Psoas muscle (tissue), 8 donors: ENCODE measurements at regions of chr19 and their contacts with region 1.

Region 1: GRCh38 chr19:3984908-3985642 is at the start of gene EEF2:
- DNase-seq: peak; percentile 89 to 96
- ATAC-seq: peak; percentile 64 to 77 (median 70)
- H3K4me3 ChIP-seq: peak within 1 kb of the TSS; percentile 91
- H3K27ac ChIP-seq: peak within 1 kb of the TSS; percentile 95
- H3K4me1 ChIP-seq: peaks cover 44% of the 10 kb centered on the region
- H3K27me3 ChIP-seq: no peaks in the 10 kb centered on the region
- CTCF ChIP-seq: no peak
- total RNA-seq, gene EEF2: 2,332 to 3,628 (median 2,726) TPM

Region 2: GRCh38 chr19:3821857-3822364 is 163.2 kb before region 1 on chr19:
- intact Hi-C with region 1: loop called in 1 of 2 experiments (anchors 5 kb)
- DNase-seq: peak; percentile 56 to 73
- ATAC-seq: peak; percentile 65 to 88 (median 79)
- H3K4me3 ChIP-seq: no peak overlapping the region
- H3K27ac ChIP-seq: no peak overlapping the region
- H3K4me1 ChIP-seq: no peaks in the 10 kb centered on the region
- H3K27me3 ChIP-seq: peaks cover 0 to 38% (median 12%) of the 10 kb centered on the region in 3 donors
- CTCF ChIP-seq: peak; percentile 98

Region 3: GRCh38 chr19:3970808-3971598 is 14.1 kb before region 1 on chr19 and contains the start of gene DAPK3:
- intact Hi-C with region 1: loop called in 1 of 2 experiments (anchors 2 kb)
- DNase-seq: peak; percentile 97 to 99
- ATAC-seq: peak; percentile 69 to 79 (median 76)
- H3K4me3 ChIP-seq: peak within 1 kb of the TSS; percentile 96
- H3K27ac ChIP-seq: peak within 1 kb of the TSS; percentile 99
- H3K4me1 ChIP-seq: peaks cover 47% of the 10 kb centered on the region
- H3K27me3 ChIP-seq: no peaks in the 10 kb centered on the region
- CTCF ChIP-seq: peak; percentile 6
- total RNA-seq, gene DAPK3: 92.6 to 142 (median 105) TPM

Region 4: GRCh38 chr19:4182084-4182810 is 197.2 kb after region 1 on chr19 and contains the starts of genes ANKRD24 and SIRT6:
- intact Hi-C with region 1: loop called in 1 of 2 experiments (anchors 5 kb)
- DNase-seq: peak; percentile 97 to 98
- ATAC-seq: peak; percentile 90 to 97 (median 94)
- H3K4me3 ChIP-seq: peak within 1 kb of the TSS; percentile 90
- H3K27ac ChIP-seq: peak within 1 kb of the TSS; percentile 87
- H3K4me1 ChIP-seq: peaks cover 27% of the 10 kb centered on the region
- H3K27me3 ChIP-seq: no peaks in the 10 kb centered on the region
- CTCF ChIP-seq: no peak
- total RNA-seq, gene ANKRD24: 0.36 to 2.7 (median 0.84) TPM
- total RNA-seq, gene SIRT6: 8.4 to 13.1 (median 11.4) TPM